B cell (primary cell): ENCODE measurements at regions of chr1 and their contacts with region 1.

Region 1: GRCh38 chr1:150925816-150926741 is at the start of gene SETDB1:
- DNase-seq: peak; percentile 97
- ATAC-seq: peak; percentile 93
- H3K4me3 ChIP-seq: peak within 1 kb of the TSS; percentile 82 to 96 (median 90)
- H3K4me3 Mint-ChIP-seq: peak within 1 kb of the TSS; percentile 98
- H3K27ac ChIP-seq: peak within 1 kb of the TSS; percentile 93 to 96
- H3K27ac Mint-ChIP-seq: peak within 1 kb of the TSS; percentile 98
- H3K4me1 ChIP-seq: peaks cover 17 to 19% of the 10 kb centered on the region in 2 donors
- H3K4me1 Mint-ChIP-seq: peaks cover 31% of the 10 kb centered on the region
- H3K27me3 ChIP-seq: no peaks in the 10 kb centered on the region
- H3K27me3 Mint-ChIP-seq: no peaks in the 10 kb centered on the region
- CTCF ChIP-seq: no peak
- total RNA-seq, gene SETDB1: 115 and 133 TPM in 2 replicates

Region 2: DNA sequence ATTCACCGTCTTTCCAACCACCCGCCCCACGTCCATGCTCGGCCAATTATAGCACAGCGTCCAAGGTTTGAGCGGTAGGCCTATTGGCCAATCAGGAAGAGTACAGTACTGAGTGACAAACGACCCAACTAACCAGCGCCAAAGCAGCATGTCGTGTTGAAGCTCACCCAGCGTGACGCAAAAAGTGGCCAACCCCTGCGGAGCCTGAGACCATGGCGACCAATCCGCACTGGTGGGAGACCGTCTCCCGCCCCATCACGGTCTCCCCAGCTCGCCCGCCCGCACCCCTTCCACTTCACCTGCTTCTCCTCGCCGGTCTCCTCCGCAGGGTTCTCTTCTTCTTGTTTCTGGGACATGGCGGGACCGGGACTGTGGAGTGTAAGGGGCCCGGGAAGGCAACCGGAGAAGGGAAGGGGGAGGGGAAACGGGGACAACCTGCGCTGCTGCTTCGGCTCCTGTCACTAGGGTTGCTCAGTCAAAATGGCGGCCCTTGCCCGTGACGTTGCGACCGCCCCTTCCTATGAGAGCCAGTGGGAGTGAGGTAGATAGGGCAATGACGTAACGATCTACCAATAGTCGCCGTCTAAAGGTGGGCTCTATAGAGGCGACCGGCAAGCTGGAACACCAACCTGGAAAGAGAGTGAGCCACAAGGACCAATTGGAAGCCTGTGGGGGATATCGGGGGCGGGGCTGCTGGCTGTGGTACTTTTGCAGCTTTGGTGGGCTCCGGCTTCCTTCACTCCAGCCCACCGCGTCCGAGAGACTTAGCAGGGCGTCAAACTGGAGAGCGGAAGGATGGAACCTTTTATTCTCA is 296.8 kb before region 1 on chr1 and contains the start of gene ENSA:
- CTCF ChIA-PET with region 1: no interaction called
- POLR2A ChIA-PET with region 1: no interaction called
- intact Hi-C with region 1: loop called (anchors 5 kb)
- DNase-seq: peak; percentile 99
- ATAC-seq: peak; percentile 85
- H3K4me3 ChIP-seq: peak within 1 kb of the TSS; percentile 74 to 93 (median 80)
- H3K4me3 Mint-ChIP-seq: no peak within 1 kb of the TSS
- H3K27ac ChIP-seq: peak within 1 kb of the TSS; percentile 95 to 96
- H3K27ac Mint-ChIP-seq: no peak within 1 kb of the TSS
- H3K4me1 ChIP-seq: peaks cover 19 to 21% of the 10 kb centered on the region in 2 donors
- H3K4me1 Mint-ChIP-seq: peaks cover 18% of the 10 kb centered on the region
- H3K27me3 ChIP-seq: no peaks in the 10 kb centered on the region
- H3K27me3 Mint-ChIP-seq: no peaks in the 10 kb centered on the region
- CTCF ChIP-seq: no peak
- total RNA-seq, gene ENSA: 115 and 119 TPM in 2 replicates

Region 3: GRCh38 chr1:150760013-150760412 is 166.1 kb before region 1 on chr1:
- CTCF ChIA-PET with region 1: interaction called, 8 read pairs
- POLR2A ChIA-PET with region 1: no interaction called
- intact Hi-C with region 1: loop called (anchors 1 kb)
- DNase-seq: peak; percentile 55
- ATAC-seq: peak; percentile 60
- H3K4me3 ChIP-seq: peak overlapping the region in 1 of 5 experiments; percentile 6
- H3K4me3 Mint-ChIP-seq: peak overlapping the region; percentile 59
- H3K27ac ChIP-seq: peak overlapping the region in 1 of 2 donors; percentile 77
- H3K27ac Mint-ChIP-seq: peak overlapping the region; percentile 64
- H3K4me1 ChIP-seq: peaks cover 38 to 43% of the 10 kb centered on the region in 2 donors
- H3K4me1 Mint-ChIP-seq: peaks cover 43% of the 10 kb centered on the region
- H3K27me3 ChIP-seq: no peaks in the 10 kb centered on the region
- H3K27me3 Mint-ChIP-seq: no peaks in the 10 kb centered on the region
- CTCF ChIP-seq: no peak

Region 4: GRCh38 chr1:150829743-150830142 is 96.3 kb before region 1 on chr1:
- CTCF ChIA-PET with region 1: interaction called, 15 read pairs
- POLR2A ChIA-PET with region 1: no interaction called
- intact Hi-C with region 1: loop called (anchors 5 kb)
- DNase-seq: no peak
- ATAC-seq: no peak
- H3K4me3 ChIP-seq: no peak overlapping the region
- H3K4me3 Mint-ChIP-seq: no peak overlapping the region
- H3K27ac ChIP-seq: no peak overlapping the region
- H3K27ac Mint-ChIP-seq: no peak overlapping the region
- H3K4me1 ChIP-seq: no peaks in the 10 kb centered on the region
- H3K4me1 Mint-ChIP-seq: no peaks in the 10 kb centered on the region
- H3K27me3 ChIP-seq: no peaks in the 10 kb centered on the region
- H3K27me3 Mint-ChIP-seq: no peaks in the 10 kb centered on the region
- CTCF ChIP-seq: peak; percentile 33

Region 5: GRCh38 chr1:150876119-150876454 is 50.0 kb before region 1 on chr1:
- CTCF ChIA-PET with region 1: interaction called, 9 read pairs
- POLR2A ChIA-PET with region 1: interaction called, 6 read pairs
- intact Hi-C with region 1: loop called (anchors 1 kb)
- DNase-seq: no peak
- ATAC-seq: no peak
- H3K4me3 ChIP-seq: peak overlapping the region; percentile 72 to 87 (median 84)
- H3K4me3 Mint-ChIP-seq: peak overlapping the region; percentile 88
- H3K27ac ChIP-seq: peak overlapping the region; percentile 64 to 80
- H3K27ac Mint-ChIP-seq: peak overlapping the region; percentile 90
- H3K4me1 ChIP-seq: peaks cover 20% of the 10 kb centered on the region in 2 donors
- H3K4me1 Mint-ChIP-seq: peaks cover 32% of the 10 kb centered on the region
- H3K27me3 ChIP-seq: no peaks in the 10 kb centered on the region
- H3K27me3 Mint-ChIP-seq: no peaks in the 10 kb centered on the region
- CTCF ChIP-seq: no peak